Motor neuron (in vitro differentiated cells): ENCODE measurements at regions of chr21 and their contacts with region 1.

Region 1: DNA sequence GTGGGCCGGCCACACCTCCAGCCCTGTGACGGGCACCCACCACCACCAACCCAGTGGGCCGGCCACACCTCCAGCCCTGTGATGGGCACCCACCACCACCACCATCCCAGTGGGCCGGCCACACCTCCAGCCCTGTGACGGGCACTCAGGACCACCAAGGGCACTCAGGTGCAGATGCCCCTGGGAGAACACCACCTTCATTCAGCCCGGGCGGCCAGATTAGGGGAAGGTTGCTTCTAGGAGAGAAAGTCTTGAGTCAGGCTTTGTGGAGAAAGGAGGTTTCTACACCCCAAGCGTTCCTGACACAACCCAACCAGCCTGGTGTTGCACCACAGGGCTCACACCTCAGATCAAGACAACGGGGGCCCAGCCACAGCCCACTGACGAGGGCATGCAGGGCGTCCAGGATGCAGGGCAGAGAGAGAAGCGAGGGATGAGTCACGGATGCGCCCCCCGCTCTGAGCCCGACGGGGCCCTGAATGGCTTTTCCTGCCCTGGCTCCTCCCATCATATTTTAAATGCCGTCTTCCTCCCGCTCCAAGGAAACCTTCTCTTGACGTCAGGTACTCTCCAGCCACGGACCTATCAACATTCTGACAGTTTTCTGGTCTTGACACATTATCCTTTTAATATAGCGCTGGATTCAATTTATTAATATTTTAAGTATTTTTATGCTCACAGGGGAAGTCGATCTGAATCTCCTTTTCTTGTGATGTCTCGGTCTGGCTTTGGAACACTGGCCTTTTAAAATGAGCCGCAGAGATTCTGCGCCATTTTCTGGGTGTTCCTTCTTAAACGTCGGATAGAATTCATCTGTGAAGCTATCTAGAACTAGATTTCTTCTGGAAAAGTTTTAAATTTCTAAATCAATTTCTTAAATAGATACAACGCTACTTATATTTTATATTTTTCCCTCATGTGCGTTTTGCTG is 631 bp upstream of the SPATC1L start:
- ATAC-seq: peak; percentile 50 to 84 (median 78)
- H3K4me3 ChIP-seq: peak overlapping the region; percentile 49 to 78 (median 56)
- H3K27ac ChIP-seq: peak overlapping the region; percentile 98
- H3K4me1 ChIP-seq: peaks cover 34 to 41% of the 10 kb centered on the region in 2 donors

Region 2: DNA sequence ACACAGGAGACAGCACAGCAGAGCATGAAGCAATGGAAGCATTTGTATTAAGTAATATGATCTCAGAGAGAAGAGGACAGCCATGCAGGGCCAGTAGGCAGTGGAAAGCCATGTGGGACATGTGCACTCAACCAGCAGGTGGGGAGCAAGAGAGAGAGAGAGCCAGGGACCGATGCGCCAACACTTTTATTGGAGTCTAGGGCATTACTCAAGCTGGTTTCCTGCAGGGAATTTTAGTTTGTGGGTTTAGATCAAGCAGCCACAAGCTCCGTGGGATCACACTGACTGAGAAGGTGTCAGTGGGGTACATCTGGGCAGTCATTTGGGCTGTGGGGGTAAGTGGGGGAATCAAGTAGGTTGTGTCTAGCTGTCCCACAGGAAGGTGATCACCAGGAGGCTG is 404.2 kb before region 1 on chr21:
- in situ Hi-C with region 1: no loop called
- ATAC-seq: no peak
- H3K4me3 ChIP-seq: no peak overlapping the region
- H3K27ac ChIP-seq: no peak overlapping the region
- H3K4me1 ChIP-seq: no peaks in the 10 kb centered on the region

Region 3: GRCh38 chr21:45981151-45982089 is 203.5 kb before region 1 on chr21 and contains the start of gene COL6A1:
- in situ Hi-C with region 1: loop called in 1 of 9 experiments (anchors 25 kb)
- ATAC-seq: peak; percentile 30 to 76 (median 58)
- H3K4me3 ChIP-seq: peak within 1 kb of the TSS; percentile 45 to 98 (median 86)
- H3K27ac ChIP-seq: peak within 1 kb of the TSS; percentile 88 to 90
- H3K4me1 ChIP-seq: peaks cover 16 to 35% of the 10 kb centered on the region in 2 donors
- total RNA-seq, gene COL6A1: 12.4 to 184 (median 81.7) TPM

Region 4: GRCh38 chr21:46572850-46573249 is 388.0 kb after region 1 on chr21:
- in situ Hi-C with region 1: no loop called
- ATAC-seq: no peak
- H3K4me3 ChIP-seq: no peak overlapping the region
- H3K27ac ChIP-seq: no peak overlapping the region
- H3K4me1 ChIP-seq: no peaks in the 10 kb centered on the region